ENCODE measurements at regions of chr6 and their contacts with region 1.

Region 1: DNA sequence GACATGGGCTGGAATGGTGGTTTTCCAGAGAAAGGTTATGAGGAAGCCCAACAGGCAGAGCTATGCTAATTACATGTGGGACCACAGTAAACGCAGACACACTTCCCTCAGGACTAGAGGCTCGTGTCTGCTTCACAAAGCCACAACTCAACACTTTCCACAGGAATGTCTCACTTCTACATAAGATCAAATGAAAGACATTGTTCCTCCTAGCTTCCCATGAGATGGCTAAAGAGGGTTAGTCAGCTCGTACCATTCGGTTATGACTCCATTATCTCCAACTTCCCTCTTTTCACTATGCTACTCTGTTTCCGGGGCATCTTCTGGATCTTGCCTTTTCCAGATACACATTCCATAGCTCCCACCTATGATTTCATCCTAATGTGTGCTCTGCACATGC is 29.1 kb upstream of the ZC3H12D start:
- H3K4me3 ChIP-seq: no peak overlapping the region
- H3K27ac ChIP-seq: no peak overlapping the region
- H3K4me1 ChIP-seq: no peaks in the 10 kb centered on the region
- CTCF ChIP-seq: no peak

Region 2: DNA sequence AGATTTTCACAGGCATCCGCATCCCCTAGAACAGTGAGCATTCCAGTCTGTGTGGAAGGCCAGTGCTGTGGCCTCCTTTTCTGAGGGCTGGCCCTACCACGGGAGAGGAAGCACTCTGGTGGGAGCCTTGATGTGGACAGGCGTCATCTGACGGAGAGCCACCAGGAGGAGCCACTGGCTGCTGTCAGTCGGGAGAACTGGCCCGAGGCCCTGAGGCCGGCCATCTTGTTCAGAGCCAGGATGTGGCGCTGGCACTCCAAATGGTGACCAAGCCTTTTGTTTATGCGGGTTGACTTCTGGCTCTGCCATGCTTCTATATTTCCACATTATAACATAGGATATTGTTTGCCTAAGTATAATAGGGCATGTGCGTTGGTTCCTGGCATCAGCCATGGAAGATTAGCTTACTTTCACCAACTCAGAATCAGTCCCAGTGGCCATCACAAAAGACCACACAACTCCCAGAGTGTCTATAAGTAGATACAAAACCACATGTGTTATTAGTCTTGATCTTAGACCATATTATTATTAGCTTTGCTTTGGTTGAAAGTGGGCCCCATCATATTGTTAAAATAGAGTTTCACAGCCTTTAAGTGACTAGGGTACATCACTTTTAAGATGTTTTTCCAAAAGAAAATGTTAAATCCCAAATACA is 470.3 kb before region 1 on chr6:
- CTCF ChIA-PET with region 1: interaction called, 13 read pairs
- POLR2A ChIA-PET with region 1: no interaction called
- H3K4me3 ChIP-seq: no peak overlapping the region
- H3K27ac ChIP-seq: no peak overlapping the region
- H3K4me1 ChIP-seq: no peaks in the 10 kb centered on the region
- CTCF ChIP-seq: peak; percentile 21; the same call in 1 of the 2 replicates

Region 3: GRCh38 chr6:149082286-149082707 is 431.6 kb before region 1 on chr6:
- CTCF ChIA-PET with region 1: interaction called, 12 read pairs
- POLR2A ChIA-PET with region 1: no interaction called
- H3K4me3 ChIP-seq: no peak overlapping the region
- H3K27ac ChIP-seq: no peak overlapping the region
- H3K4me1 ChIP-seq: peaks cover 11% of the 10 kb centered on the region
- CTCF ChIP-seq: peak; percentile 78

Region 4: GRCh38 chr6:149503276-149503675 is 10.6 kb before region 1 on chr6:
- CTCF ChIA-PET with region 1: interaction called, 42 read pairs
- POLR2A ChIA-PET with region 1: interaction called, 5 read pairs
- H3K4me3 ChIP-seq: no peak overlapping the region
- H3K27ac ChIP-seq: no peak overlapping the region
- H3K4me1 ChIP-seq: no peaks in the 10 kb centered on the region
- CTCF ChIP-seq: no peak

Region 5: DNA sequence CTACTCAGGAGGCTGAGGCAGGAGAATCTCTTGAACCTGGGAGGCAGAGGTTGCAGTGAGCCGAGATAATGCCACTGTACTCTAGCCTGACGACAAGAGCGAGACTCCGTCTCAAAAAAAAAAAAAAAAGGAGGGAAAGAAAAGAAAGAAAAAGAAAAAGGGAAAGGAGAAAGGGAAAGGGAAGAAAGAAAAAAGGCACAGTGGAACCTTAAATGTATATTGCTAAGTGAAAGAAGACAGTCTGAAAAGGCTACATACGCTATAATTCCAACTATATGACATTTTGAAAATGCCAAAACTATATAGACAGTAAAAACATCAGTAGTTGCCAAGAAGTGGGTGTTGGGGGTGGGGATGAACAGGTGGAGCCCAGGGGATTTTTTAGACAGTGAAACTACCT is 15.7 kb after region 1 on chr6:
- CTCF ChIA-PET with region 1: interaction called, 37 read pairs
- POLR2A ChIA-PET with region 1: interaction called, 5 read pairs
- H3K4me3 ChIP-seq: no peak overlapping the region
- H3K27ac ChIP-seq: no peak overlapping the region
- H3K4me1 ChIP-seq: no peaks in the 10 kb centered on the region
- CTCF ChIP-seq: no peak